K562 (cell line): ENCODE measurements at regions of chr7 and their contacts with region 1.

Region 1: GRCh38 chr7:102396027-102397019 is at the start of gene PRKRIP1:
- DNase-seq: peak; percentile 87 to 93 (median 88)
- ATAC-seq: peak; percentile 97
- H3K4me3 ChIP-seq: peak within 1 kb of the TSS; percentile 83
- H3K27ac ChIP-seq: peak within 1 kb of the TSS; percentile 65
- H3K4me1 ChIP-seq: peaks cover 5 to 15% of the 10 kb centered on the region in 2 experiments; a peak in 3 of 5 replicates
- H3K27me3 ChIP-seq: no peaks in the 10 kb centered on the region
- CTCF ChIP-seq: no peak
- EP300 ChIP-seq: peak; percentile 23; the same call in 1 of the 2 replicates
- POLR2A ChIP-seq: peak; percentile 85
- RAD21 ChIP-seq: no peak
- polyA plus RNA-seq, gene PRKRIP1: 14.9 to 19.6 TPM

Region 2: GRCh38 chr7:101085162-101085987 is 1310.9 kb before region 1 on chr7 and contains the start of gene TRIM56:
- CTCF ChIA-PET with region 1: no interaction called
- POLR2A ChIA-PET with region 1: no interaction called
- in situ Hi-C with region 1: no loop called
- intact Hi-C with region 1: no loop called
- DNase-seq: peak; percentile 92 to 97 (median 95)
- ATAC-seq: peak; percentile 98
- H3K4me3 ChIP-seq: peak within 1 kb of the TSS; percentile 71
- H3K27ac ChIP-seq: peak within 1 kb of the TSS; percentile 93
- H3K4me1 ChIP-seq: peaks cover 11 to 34% of the 10 kb centered on the region in 2 experiments; a peak in 4 of 5 replicates
- H3K27me3 ChIP-seq: no peaks in the 10 kb centered on the region
- CTCF ChIP-seq: no peak
- EP300 ChIP-seq: no peak
- POLR2A ChIP-seq: peak; percentile 90
- RAD21 ChIP-seq: no peak
- polyA plus RNA-seq, gene TRIM56: 2.0 to 2.7 TPM

Region 3: DNA sequence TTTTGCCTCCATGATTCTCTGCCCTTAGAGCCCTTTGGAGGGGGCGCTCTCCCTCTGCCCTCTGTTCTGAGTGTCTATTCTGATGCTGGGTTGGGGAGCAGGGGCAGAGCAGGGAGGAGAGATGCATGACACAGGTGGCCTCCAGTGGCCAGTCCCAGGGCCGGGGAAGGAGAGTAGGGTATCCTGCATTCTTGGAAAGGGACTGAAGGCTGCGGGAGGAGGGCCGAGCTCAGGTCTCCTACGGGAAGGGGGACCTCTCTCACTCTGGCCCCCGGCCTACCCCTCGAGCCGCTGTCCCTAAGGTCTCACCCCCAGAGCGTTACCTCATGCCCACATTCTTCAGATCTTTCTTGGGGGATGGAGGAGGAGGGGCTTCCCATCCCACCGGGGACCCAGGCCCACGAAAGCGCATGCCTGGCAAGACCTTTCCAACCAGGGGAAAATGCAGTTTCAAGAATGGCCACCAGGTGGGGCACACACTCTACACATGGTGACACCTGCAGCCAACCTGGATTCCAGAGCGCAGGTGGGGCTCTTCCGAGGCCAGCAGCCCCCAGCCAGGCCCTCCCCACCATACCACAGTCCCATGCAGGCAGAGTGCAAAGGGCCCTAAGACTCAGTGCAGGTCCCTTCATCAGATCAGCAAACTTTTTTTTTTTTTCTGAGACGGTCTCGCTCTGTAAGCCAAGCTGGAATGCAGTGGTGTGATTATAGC is 853.6 kb before region 1 on chr7:
- CTCF ChIA-PET with region 1: no interaction called
- POLR2A ChIA-PET with region 1: no interaction called
- in situ Hi-C with region 1: no loop called
- intact Hi-C with region 1: loop called (anchors 10 kb)
- DNase-seq: peak; percentile 68 to 81 (median 76)
- ATAC-seq: peak; percentile 76
- H3K4me3 ChIP-seq: no peak overlapping the region
- H3K27ac ChIP-seq: no peak overlapping the region
- H3K4me1 ChIP-seq: peaks cover 0 to 26% of the 10 kb centered on the region in 2 experiments; a peak in 1 of 5 replicates
- H3K27me3 ChIP-seq: peaks cover 0 to 5% of the 10 kb centered on the region in 2 experiments; a peak in 2 of 5 replicates
- CTCF ChIP-seq: peak; percentile 88 to 93 (median 91)
- EP300 ChIP-seq: no peak
- POLR2A ChIP-seq: no peak
- RAD21 ChIP-seq: peak; percentile 89 to 93

Region 4: GRCh38 chr7:101953248-101953819 is 443.0 kb before region 1 on chr7:
- CTCF ChIA-PET with region 1: no interaction called
- POLR2A ChIA-PET with region 1: no interaction called
- in situ Hi-C with region 1: no loop called
- intact Hi-C with region 1: no loop called
- DNase-seq: no peak
- ATAC-seq: no peak
- H3K4me3 ChIP-seq: no peak overlapping the region
- H3K27ac ChIP-seq: no peak overlapping the region
- H3K4me1 ChIP-seq: peaks cover 3 to 7% of the 10 kb centered on the region in 2 experiments; a peak in 4 of 5 replicates
- H3K27me3 ChIP-seq: no peaks in the 10 kb centered on the region
- CTCF ChIP-seq: no peak
- EP300 ChIP-seq: no peak
- POLR2A ChIP-seq: no peak
- RAD21 ChIP-seq: no peak